ENCODE measurements at regions of chr7 and their contacts with region 1.

Region 1: DNA sequence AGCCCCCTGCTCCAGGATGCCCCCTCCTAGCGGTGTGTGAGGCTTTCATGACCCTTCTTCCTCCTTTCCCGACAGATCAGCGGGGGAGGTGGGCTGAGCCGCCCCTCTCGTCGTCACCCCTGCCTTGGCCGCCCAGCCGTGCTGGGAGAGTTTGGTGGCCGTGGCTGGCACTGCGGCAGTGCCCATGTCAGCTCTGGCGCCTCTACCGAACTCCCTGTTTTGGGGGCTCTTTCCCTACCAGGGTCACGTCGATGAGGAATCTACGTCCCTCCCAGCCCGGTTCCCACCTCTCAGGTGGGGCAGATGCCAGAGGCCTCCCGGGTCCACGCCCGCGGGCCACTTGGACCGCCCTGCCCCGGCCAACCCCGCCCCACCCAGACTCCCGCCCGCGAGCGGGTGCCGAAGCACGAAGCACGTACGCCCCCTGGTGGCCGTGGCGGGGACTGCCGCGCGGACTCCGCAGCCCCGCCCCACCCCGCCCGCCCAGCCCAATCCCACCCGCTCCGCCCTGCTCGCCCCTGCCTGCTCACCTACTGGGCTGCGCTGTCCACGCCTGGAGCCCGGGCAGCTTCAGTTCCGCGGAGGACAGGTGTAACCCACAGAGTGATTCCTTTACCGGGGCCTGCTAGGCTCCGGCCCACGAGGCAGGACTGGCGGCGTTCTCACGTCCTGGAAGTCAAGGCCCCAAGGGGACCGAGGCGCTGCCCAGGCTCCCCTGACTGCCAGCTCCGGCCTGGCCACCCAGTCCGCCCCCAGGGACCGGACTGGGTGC is 127.1 kb downstream of the UBE2H start:
- DNase-seq: peak; percentile 87 to 95 (median 90)
- ATAC-seq: peak; percentile 59 to 88 (median 82)
- H3K4me3 ChIP-seq: peak overlapping the region; percentile 48 to 76 (median 59)
- H3K27ac ChIP-seq: peak overlapping the region in 8 of 12 donors; percentile 14 to 69 (median 48)
- H3K4me1 ChIP-seq: peaks cover 0 to 40% (median 24%) of the 10 kb centered on the region in 12 donors
- H3K27me3 ChIP-seq: no peaks in the 10 kb centered on the region
- CTCF ChIP-seq: peak; percentile 89 to 100 (median 95)
- POLR2A ChIP-seq: peak in 1 of 2 donors; percentile 9

Region 2: GRCh38 chr7:129218514-129219062 is 607.1 kb before region 1 on chr7:
- intact Hi-C with region 1: loop called in 1 of 10 experiments (anchors 10 kb)
- DNase-seq: peak; percentile 81 to 92 (median 84)
- ATAC-seq: peak; percentile 81 to 92 (median 90)
- H3K4me3 ChIP-seq: no peak overlapping the region
- H3K27ac ChIP-seq: no peak overlapping the region
- H3K4me1 ChIP-seq: peaks cover 0 to 16% (median 0%) of the 10 kb centered on the region in 12 donors
- H3K27me3 ChIP-seq: peaks cover 0 to 6% (median 0%) of the 10 kb centered on the region in 9 donors
- CTCF ChIP-seq: peak; percentile 81 to 96 (median 92)
- POLR2A ChIP-seq: no peak

Region 3: GRCh38 chr7:129367700-129368388 is 457.8 kb before region 1 on chr7:
- intact Hi-C with region 1: loop called in 2 of 10 experiments (anchors 5 to 10 kb)
- DNase-seq: peak; percentile 54 to 78 (median 73)
- ATAC-seq: peak; percentile 62 to 88 (median 88)
- H3K4me3 ChIP-seq: peak overlapping the region in 6 of 12 donors; percentile 6 to 25 (median 18)
- H3K27ac ChIP-seq: no peak overlapping the region
- H3K4me1 ChIP-seq: peaks cover 0 to 14% (median 5%) of the 10 kb centered on the region in 12 donors
- H3K27me3 ChIP-seq: no peaks in the 10 kb centered on the region
- CTCF ChIP-seq: peak; percentile 78 to 94 (median 86)
- POLR2A ChIP-seq: no peak

Region 4: GRCh38 chr7:129657363-129657762 is 168.3 kb before region 1 on chr7:
- intact Hi-C with region 1: loop called in 5 of 10 experiments (anchors 5 kb)
- DNase-seq: no peak
- ATAC-seq: no peak
- H3K4me3 ChIP-seq: no peak overlapping the region
- H3K27ac ChIP-seq: no peak overlapping the region
- H3K4me1 ChIP-seq: peaks cover 0 to 9% (median 0%) of the 10 kb centered on the region in 12 donors
- H3K27me3 ChIP-seq: no peaks in the 10 kb centered on the region
- CTCF ChIP-seq: no peak
- POLR2A ChIP-seq: no peak

Region 5: DNA sequence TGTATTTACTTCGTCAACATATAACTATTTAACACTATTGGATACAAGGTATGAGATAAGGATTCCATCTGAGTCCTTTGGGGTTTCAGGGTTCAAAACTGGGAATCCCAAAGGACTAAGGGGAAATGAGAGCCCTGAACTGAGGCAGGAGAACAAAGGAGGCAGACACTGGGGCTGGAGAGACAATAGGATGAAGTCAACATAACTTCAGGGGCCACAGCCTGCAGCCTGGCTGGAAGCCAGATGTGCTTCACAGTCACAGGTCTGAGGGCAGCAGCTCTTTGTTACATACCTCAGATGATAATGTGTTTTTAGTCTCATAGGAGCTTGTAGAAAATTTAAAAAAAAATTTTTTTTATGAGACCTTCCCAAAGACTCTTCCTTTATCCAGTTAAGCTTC is 140.9 kb before region 1 on chr7:
- intact Hi-C with region 1: no loop called
- DNase-seq: peak in 3 of 5 donors; percentile 26 to 40 (median 35)
- ATAC-seq: peak in 1 of 4 donors; percentile 37
- H3K4me3 ChIP-seq: no peak overlapping the region
- H3K27ac ChIP-seq: no peak overlapping the region
- H3K4me1 ChIP-seq: peaks cover 0 to 18% (median 0%) of the 10 kb centered on the region in 12 donors
- H3K27me3 ChIP-seq: no peaks in the 10 kb centered on the region
- CTCF ChIP-seq: no peak
- POLR2A ChIP-seq: no peak

Region 6: DNA sequence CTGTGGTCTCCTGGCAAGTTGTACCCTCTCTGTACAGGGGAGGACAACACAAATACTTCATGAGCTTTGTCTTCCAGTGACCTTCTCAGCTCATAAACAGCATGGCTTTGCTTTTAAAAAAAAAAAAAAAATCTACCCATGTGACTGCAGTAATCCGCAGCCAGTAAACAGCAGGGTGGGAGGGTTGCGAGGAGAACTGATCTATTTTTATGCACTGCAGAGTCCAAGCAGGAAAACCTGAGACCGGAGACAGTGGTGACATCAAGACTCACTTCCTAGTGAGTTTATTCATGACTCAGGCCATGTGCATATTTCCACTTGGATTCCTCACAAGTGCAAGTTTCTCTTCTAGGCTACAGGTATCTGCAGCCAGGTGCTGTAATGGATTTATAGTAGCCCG is 86.3 kb before region 1 on chr7:
- intact Hi-C with region 1: loop called in 1 of 10 experiments (anchors 10 kb)
- DNase-seq: peak in 4 of 5 donors; percentile 46 to 61 (median 55)
- ATAC-seq: peak; percentile 86 to 97 (median 92)
- H3K4me3 ChIP-seq: no peak overlapping the region
- H3K27ac ChIP-seq: peak overlapping the region; percentile 3 to 81 (median 50)
- H3K4me1 ChIP-seq: peaks cover 3 to 50% (median 24%) of the 10 kb centered on the region in 12 donors
- H3K27me3 ChIP-seq: no peaks in the 10 kb centered on the region
- CTCF ChIP-seq: no peak
- POLR2A ChIP-seq: no peak

Region 7: DNA sequence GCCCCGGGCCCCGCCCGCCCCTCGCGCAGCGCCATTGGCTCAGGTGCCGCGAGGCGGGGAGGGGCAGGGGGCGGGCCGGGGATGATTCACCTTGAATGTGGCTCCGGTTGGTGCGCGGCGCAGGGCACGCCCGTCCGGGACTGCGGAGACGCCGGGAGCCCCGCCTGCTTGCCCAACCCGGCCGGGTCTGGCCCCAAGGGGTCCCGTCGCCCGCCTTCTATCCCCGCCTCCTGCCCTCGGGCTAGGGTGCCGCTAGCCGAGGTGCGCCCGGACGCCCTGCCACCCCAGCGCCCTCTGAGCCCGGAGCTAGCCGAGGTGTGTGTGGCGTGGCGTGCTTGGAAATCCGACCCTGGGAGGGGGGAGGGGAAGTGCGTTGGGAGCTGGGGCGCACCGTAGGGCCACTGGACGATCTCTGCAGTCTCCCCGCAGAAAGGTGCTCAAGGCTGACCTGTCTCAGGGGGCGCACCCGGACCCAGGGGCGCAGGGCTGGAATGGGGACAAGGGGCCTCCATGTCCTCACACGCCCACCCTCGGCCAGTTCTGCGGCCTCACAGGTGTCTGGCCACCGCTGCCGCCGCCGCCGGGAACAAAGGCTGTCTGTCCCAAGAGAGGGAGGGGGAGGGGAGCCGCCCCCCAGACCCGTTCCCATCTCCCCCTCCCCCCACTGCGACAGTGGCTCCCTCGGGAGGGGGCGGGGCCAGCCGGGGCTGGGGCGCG is 45.3 kb before region 1 on chr7:
- intact Hi-C with region 1: no loop called
- DNase-seq: no peak
- ATAC-seq: peak in 1 of 4 donors; percentile 48
- H3K4me3 ChIP-seq: peak overlapping the region; percentile 20 to 56 (median 43)
- H3K27ac ChIP-seq: no peak overlapping the region
- H3K4me1 ChIP-seq: peaks cover 0 to 69% (median 54%) of the 10 kb centered on the region in 12 donors
- H3K27me3 ChIP-seq: peaks cover 78 to 100% (median 97%) of the 10 kb centered on the region in 9 donors
- CTCF ChIP-seq: no peak
- POLR2A ChIP-seq: no peak

Region 8: GRCh38 chr7:129990403-129991192 is 164.9 kb after region 1 on chr7:
- intact Hi-C with region 1: loop called in 1 of 10 experiments (anchors 10 kb)
- DNase-seq: peak in 2 of 5 donors; percentile 25 to 27
- ATAC-seq: peak; percentile 54 to 83 (median 79)
- H3K4me3 ChIP-seq: no peak overlapping the region
- H3K27ac ChIP-seq: peak overlapping the region in 8 of 12 donors; percentile 15 to 50 (median 24)
- H3K4me1 ChIP-seq: peaks cover 0 to 12% (median 2%) of the 10 kb centered on the region in 12 donors
- H3K27me3 ChIP-seq: no peaks in the 10 kb centered on the region
- CTCF ChIP-seq: no peak
- POLR2A ChIP-seq: no peak